Posterior cingulate gyrus (tissue), 11 donors: ENCODE measurements at regions of chr1 and their contacts with region 1.

Region 1: DNA sequence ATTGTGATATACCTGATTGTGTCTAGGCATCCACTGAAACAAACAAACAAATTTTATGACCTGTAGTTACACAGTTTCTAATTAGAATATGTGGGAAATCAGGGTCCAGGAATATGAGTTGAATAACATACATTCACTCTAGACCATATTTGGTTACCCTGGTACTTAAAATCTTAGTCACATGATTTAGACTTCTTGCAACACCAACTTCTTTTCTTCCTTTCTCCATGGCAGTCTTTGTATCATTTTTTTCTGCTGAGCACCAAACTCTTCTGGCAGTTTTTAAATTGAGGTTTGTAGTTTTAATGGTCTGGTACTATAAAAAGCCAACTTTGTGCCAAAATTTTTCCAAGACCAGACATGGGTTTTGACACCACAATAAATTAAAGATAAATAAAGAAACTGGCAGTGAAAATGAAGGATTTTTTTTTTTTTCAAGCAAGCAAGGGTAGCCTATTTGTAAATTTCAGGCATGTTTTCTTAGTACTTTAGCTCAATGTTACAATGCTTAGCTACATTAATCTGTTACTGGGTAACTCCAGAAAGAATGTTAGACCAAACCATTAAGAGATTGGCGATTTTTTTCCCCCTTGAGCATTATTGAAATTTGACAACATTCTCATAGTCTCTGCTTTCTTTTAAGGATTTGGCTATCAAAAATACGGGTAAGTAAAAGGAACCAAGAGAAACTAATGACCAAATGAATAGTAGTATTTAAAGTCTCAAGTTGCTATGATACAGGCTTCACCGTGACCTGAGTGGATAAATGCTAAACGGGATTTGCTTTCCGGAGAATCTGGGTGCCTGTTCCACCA is 108.5 kb downstream of the NFIA start:
- DNase-seq: no peak

Region 2: DNA sequence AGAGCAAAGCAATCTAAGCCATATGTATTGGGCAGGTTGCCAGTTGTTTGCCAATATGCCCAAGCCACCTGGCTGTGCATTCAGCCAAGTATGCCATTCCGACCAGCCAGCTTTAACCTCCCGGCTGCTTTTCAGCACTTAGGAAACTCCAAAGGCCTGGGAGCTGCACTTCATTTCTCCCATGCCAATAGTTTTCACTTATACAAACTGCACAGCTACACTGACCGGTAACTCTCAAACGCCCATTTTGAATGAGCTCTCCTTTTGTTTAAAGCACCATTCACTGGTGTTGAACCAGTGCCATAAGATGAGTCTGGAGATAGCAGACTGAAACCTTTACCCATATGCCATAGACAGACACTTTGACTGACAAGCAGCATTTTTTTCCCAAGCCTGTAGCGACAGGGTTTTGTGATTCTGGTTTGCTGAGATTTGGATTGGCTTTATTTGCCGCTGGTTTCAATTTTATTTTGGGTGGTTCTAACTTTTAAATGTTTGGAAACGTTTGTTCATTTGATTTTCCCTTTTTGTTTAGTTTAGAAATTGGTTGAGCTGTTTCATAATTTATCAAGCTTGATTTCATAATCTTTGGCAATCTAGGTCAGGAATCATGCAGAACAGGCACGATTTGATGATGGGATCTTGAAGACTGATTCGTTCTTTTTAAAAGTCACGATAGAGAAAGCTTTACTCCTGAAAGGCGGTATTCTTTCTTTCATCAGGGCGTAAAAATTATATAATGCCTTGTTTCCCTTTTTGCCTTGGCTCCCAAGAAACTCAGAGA is 36.2 kb after region 1 on chr1:
- intact Hi-C with region 1: no loop called
- DNase-seq: no peak

Region 3: DNA sequence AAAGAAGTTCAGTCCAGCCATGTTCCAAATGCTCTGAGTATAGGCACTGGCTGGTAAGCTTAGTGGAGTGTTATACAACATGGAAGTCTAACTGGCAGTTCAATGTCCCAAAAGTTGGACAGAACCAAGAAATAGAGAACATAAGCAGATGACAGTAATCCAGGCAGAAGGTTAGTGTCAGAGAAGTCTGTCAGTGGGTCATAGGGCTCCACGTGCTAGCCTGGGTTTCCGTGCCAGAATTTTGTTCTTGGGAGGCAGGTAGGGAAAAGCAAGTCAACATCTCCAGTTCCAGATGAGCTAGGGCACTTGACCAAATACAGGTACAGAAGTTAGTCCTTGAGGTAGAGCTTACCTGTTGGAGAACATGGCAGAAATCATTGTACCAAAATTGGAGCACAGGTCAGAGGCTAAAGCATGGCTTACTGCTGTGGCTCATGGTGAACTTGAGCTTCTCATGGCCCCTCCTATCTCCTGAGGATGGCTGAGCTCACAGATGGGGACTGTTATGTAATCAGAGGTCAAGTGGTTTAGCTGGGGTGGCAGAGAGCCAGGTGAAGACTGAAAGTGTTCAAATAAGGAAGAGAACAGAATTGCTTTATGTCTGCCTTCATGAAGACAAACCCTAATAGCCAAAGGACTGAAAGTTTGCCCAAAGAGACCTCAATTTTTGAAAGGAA is 62.4 kb after region 1 on chr1:
- intact Hi-C with region 1: loop called (anchors 10 kb)
- DNase-seq: peak in 5 of 10 donors; percentile 23 to 58 (median 33)